Common myeloid progenitor, CD34-positive (primary cell): ENCODE measurements at regions of chr18 and their contacts with region 1.

Region 1: GRCh38 chr18:45764000-45764686 is 40.2 kb downstream of the SLC14A1 start:
- DNase-seq: peak in 2 of 3 donors; percentile 26 to 39
- H3K4me3 ChIP-seq: no peak overlapping the region
- H3K27ac ChIP-seq: no peak overlapping the region
- H3K4me1 ChIP-seq: peaks cover 2 to 36% (median 29%) of the 10 kb centered on the region in 4 experiments
- H3K27me3 ChIP-seq: no peaks in the 10 kb centered on the region

Region 2: GRCh38 chr18:45652303-45653080 is 111.7 kb before region 1 on chr18:
- CTCF ChIA-PET with region 1: no interaction called
- POLR2A ChIA-PET with region 1: no interaction called
- DNase-seq: peak in 2 of 3 donors; percentile 10 to 36
- H3K4me3 ChIP-seq: no peak overlapping the region
- H3K27ac ChIP-seq: no peak overlapping the region
- H3K4me1 ChIP-seq: peaks cover 0 to 14% (median 3%) of the 10 kb centered on the region in 4 experiments
- H3K27me3 ChIP-seq: no peaks in the 10 kb centered on the region

Region 3: GRCh38 chr18:45775241-45775676 is 11.1 kb after region 1 on chr18:
- CTCF ChIA-PET with region 1: interaction called, 15 read pairs
- POLR2A ChIA-PET with region 1: no interaction called
- DNase-seq: peak; percentile 87 to 89 (median 88)
- H3K4me3 ChIP-seq: peak overlapping the region; percentile 15 to 90 (median 73)
- H3K27ac ChIP-seq: peak overlapping the region; percentile 59 to 78
- H3K4me1 ChIP-seq: peaks cover 4 to 22% (median 16%) of the 10 kb centered on the region in 4 experiments
- H3K27me3 ChIP-seq: no peaks in the 10 kb centered on the region